ENCODE measurements at regions of chr1 and their contacts with region 1.

Region 1: GRCh38 chr1:86833461-86834215 is 80.3 kb downstream of the SELENOF start:
- DNase-seq: peak; percentile 54 to 72 (median 66)
- ATAC-seq: peak; percentile 91 to 100 (median 97)
- H3K4me3 ChIP-seq: no peak overlapping the region
- H3K27ac ChIP-seq: no peak overlapping the region
- H3K4me1 ChIP-seq: no peaks in the 10 kb centered on the region
- H3K27me3 ChIP-seq: no peaks in the 10 kb centered on the region
- CTCF ChIP-seq: peak; percentile 21 to 39 (median 32)

Region 2: DNA sequence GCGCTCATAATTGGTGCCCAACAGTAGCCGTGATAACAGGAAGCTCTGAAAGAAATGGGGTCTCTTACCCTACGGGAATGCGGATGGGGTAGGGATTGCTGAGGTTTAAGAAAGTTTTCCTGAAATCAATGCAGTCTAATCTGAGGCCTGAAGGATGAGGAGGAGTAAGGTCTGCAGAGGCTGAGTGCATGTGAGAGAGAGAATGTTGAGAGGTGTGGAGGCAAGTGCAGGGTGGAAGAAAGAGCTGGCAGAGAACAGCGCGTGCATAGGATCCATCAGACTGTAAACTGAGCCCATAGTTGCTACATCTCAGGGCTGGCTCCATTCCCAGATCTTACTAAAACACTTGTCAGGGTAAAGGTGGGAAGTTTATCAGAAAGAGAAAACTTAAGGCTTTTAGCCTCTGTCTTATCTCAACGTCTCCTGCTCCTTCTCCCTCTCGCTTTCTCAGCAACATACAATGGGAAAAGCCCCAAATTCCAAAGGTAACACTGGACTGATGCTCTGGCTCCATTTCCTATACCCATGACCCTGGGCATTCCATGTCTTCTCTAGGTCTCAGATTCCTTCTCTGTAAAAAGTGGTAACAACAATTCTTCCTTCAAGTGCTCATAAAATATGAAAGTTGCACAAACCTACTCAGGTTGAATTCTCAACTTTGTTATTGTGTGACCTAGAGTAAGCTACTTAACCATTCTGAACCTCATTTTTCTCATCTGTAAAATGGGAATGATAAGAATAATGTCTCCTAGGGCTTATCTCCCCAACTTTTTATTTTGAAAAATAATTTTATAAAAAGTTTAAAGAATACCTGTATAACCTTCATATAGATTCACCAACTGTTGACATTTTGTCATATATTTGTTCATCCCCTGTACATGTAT is 54.1 kb before region 1 on chr1:
- intact Hi-C with region 1: no loop called
- DNase-seq: no peak
- ATAC-seq: no peak
- H3K4me3 ChIP-seq: no peak overlapping the region
- H3K27ac ChIP-seq: no peak overlapping the region
- H3K4me1 ChIP-seq: peaks cover 0 to 11% (median 0%) of the 10 kb centered on the region in 3 donors
- H3K27me3 ChIP-seq: no peaks in the 10 kb centered on the region
- CTCF ChIP-seq: no peak

Region 3: DNA sequence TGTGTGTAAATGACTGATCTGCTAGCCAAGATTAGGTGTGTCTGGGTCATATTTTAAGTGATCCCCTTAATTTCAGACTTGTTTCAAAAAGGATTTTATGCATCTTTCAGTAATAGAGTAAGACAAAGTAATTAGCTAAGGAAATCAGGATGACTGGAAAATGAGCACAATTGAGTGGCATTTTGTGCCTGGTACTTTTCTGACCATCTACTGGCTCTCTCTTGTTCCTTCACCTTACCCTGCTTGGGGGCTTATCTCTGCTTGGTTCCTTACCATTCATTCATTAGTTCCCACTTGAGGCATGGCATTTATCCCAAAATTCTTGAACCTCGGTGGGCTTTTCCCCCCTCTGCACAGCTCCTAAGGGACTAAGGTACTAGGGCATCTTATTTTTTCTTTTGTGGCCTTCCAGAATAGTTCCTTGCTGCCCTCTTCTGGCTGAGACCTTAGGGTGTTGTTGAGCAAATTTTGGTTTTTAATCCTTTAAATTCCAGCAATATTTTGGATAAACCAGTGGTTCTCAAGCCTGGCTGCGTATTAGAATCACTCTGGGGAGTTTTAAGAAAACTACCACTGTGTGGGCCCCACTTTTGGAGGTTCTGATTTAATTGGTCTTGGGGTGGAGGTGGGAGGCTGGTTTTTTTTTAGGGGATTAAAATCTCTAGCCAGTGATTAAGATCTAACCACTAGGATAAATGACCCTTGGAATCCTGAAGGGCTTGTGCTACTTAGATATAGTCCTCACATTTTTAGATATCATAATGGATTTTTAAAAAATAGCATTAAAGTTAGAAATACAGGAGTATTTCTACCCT is 131.6 kb after region 1 on chr1:
- intact Hi-C with region 1: loop called in 2 of 3 experiments (anchors 5 to 10 kb)
- DNase-seq: no peak
- ATAC-seq: peak in 3 of 4 donors; percentile 52 to 60 (median 54)
- H3K4me3 ChIP-seq: no peak overlapping the region
- H3K27ac ChIP-seq: no peak overlapping the region
- H3K4me1 ChIP-seq: no peaks in the 10 kb centered on the region
- H3K27me3 ChIP-seq: no peaks in the 10 kb centered on the region
- CTCF ChIP-seq: peak in 3 of 4 donors; percentile 24 to 32 (median 27)

Region 4: DNA sequence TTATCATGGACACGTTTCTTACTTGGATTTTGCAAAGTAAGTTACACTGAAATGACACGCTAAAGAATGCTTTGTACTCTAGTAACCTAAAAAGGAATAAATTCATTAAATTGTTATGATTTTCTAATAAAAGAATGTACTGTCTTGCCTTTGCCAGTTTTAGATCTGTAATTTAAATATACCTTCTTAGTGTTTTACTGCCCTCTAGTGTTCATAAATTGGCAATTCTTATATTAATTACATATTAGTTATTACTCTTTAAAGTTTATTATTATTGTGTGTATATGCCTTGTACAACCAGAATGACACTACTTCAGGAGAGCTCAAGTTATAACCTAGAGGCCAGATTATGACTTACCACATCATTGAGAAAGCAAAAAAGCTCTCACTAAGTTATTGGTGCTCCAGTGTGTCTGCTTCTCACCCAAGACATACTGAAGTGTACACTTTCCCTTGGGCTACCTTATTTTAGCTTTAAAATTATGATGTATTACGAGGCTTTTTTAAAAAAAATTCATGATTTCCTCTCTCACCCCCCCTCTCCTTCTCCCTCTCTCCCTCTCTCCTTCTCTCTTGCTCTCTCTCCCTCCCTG is 250.7 kb after region 1 on chr1:
- intact Hi-C with region 1: loop called in 1 of 3 experiments (anchors 10 kb)
- DNase-seq: no peak
- ATAC-seq: peak in 3 of 4 donors; percentile 53 to 74 (median 74)
- H3K4me3 ChIP-seq: no peak overlapping the region
- H3K27ac ChIP-seq: no peak overlapping the region
- H3K4me1 ChIP-seq: no peaks in the 10 kb centered on the region
- H3K27me3 ChIP-seq: no peaks in the 10 kb centered on the region
- CTCF ChIP-seq: peak in 3 of 4 donors; percentile 37 to 56 (median 45)